ENCODE measurements at regions of chr2 and their contacts with region 1.

Region 1: GRCh38 chr2:227238238-227239237 is 74.1 kb downstream of the COL4A3 start:
- DNase-seq: peak; percentile 43
- H3K4me3 ChIP-seq: no peak overlapping the region
- H3K27ac ChIP-seq: no peak overlapping the region
- H3K27me3 ChIP-seq: peaks cover 5% of the 10 kb centered on the region
- CTCF ChIP-seq: peak; percentile 98

Region 2: DNA sequence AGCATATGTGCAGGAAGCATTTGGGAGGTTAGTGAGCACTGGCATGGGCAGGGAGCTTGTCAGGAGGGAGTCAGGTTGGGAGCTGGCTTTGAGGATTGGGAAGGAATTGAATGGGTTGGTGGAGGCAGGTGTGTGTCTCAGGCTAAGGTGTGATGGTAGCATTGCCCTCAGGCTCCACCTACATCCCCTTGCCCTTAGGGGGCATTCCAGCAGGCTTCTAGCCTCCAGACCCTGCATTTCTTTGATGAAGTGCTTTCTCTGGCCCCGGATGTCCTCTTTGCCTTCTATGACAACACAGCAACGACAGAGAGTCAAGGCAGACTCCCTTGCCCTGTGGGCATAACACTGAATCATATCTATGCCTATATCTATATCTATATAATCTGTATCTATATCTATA is 389.2 kb before region 1 on chr2:
- CTCF ChIA-PET with region 1: no interaction called
- POLR2A ChIA-PET with region 1: no interaction called
- DNase-seq: no peak
- H3K4me3 ChIP-seq: no peak overlapping the region
- H3K27ac ChIP-seq: no peak overlapping the region
- H3K27me3 ChIP-seq: no peaks in the 10 kb centered on the region
- CTCF ChIP-seq: no peak

Region 3: GRCh38 chr2:227125506-227125905 is 113.0 kb before region 1 on chr2:
- CTCF ChIA-PET with region 1: interaction called, 154 read pairs
- POLR2A ChIA-PET with region 1: no interaction called
- DNase-seq: no peak
- H3K4me3 ChIP-seq: no peak overlapping the region
- H3K27ac ChIP-seq: no peak overlapping the region
- H3K27me3 ChIP-seq: peaks cover 11% of the 10 kb centered on the region
- CTCF ChIP-seq: peak; percentile 33; the same call in 1 of the 2 replicates

Region 4: DNA sequence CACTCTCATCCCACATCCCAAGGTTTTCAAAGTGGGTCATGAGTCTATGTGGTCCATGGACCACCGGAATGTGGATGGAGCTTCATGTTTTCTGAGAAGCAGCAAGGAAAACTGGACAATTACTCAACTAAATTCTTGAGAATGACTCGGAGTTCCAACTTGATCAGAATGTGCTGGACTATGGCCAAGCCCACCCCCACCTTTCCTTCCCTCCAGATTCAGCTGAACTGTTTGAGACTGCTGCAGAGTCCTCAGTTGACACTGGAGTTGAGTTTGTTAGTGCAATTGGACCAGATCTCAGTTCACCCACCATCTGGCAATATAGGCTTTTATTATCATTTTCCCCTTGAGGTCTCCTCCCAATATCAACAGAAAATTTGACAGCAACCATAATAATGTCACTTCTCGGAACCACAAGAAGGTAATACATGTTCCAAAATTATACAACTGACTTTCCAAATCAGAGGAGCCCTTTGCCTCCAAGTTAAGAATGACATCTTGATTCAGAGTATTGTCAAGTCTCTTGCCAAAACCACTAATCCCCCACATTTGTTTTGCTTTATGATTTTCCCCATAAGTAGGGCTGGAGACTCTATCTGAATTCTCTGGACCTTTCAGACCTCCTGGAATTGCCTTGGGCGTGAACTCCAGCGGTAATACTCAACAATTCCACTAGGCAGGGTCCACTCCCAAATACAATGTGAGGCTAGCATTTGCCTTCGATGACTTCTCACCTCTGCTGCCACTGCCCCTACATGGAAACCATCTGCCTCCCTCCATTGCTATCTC is 83.4 kb before region 1 on chr2:
- CTCF ChIA-PET with region 1: interaction called, 14 read pairs
- POLR2A ChIA-PET with region 1: no interaction called
- DNase-seq: peak; percentile 1
- H3K4me3 ChIP-seq: no peak overlapping the region
- H3K27ac ChIP-seq: no peak overlapping the region
- H3K27me3 ChIP-seq: no peaks in the 10 kb centered on the region
- CTCF ChIP-seq: no peak

Region 5: DNA sequence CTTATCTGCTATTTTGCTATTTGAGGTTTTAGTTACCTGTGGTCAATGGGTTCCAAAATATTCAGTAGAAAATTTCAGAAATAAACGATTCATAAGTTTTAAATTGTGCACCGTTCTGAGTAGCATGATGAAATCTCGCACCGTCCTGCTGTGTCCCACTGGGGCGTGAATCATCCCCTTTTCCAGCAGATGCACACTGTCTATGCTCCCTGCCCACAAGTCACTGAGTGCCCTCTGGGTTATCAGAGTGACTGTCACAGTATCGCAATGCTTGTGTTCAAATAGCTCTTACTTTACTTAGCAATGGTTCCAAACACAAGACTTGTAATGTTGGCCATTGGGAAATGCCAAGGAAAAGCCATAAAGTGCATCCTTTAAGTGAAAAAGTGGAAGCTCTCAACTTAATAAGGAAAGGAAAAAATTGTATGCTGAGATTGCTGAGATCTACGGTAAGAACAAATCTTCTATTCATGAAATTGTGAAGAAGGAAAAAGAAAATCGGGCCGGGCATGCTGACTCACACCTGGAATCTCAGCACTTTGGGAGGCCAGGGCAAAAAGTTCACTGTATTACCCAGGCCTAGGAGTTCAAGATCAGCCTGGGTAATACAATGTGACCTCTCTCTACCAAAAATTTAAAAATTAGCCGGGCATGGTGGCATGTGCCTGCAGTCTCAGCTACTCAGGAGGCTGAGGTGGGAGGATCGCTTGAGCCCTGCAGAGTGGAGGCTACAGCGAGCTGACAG is 60.8 kb before region 1 on chr2:
- CTCF ChIA-PET with region 1: no interaction called
- POLR2A ChIA-PET with region 1: no interaction called
- DNase-seq: no peak
- H3K4me3 ChIP-seq: no peak overlapping the region
- H3K27ac ChIP-seq: no peak overlapping the region
- H3K27me3 ChIP-seq: no peaks in the 10 kb centered on the region
- CTCF ChIP-seq: no peak

Region 6: GRCh38 chr2:227228061-227228667 is 10.4 kb before region 1 on chr2:
- CTCF ChIA-PET with region 1: interaction called, 86 read pairs
- POLR2A ChIA-PET with region 1: no interaction called
- DNase-seq: no peak
- H3K4me3 ChIP-seq: no peak overlapping the region
- H3K27ac ChIP-seq: no peak overlapping the region
- H3K27me3 ChIP-seq: peaks cover 3% of the 10 kb centered on the region
- CTCF ChIP-seq: no peak

Region 7: GRCh38 chr2:227267410-227268148 is 29.0 kb after region 1 on chr2:
- CTCF ChIA-PET with region 1: interaction called, 12 read pairs
- POLR2A ChIA-PET with region 1: no interaction called
- DNase-seq: no peak
- H3K4me3 ChIP-seq: no peak overlapping the region
- H3K27ac ChIP-seq: no peak overlapping the region
- H3K27me3 ChIP-seq: no peaks in the 10 kb centered on the region
- CTCF ChIP-seq: no peak

Region 8: DNA sequence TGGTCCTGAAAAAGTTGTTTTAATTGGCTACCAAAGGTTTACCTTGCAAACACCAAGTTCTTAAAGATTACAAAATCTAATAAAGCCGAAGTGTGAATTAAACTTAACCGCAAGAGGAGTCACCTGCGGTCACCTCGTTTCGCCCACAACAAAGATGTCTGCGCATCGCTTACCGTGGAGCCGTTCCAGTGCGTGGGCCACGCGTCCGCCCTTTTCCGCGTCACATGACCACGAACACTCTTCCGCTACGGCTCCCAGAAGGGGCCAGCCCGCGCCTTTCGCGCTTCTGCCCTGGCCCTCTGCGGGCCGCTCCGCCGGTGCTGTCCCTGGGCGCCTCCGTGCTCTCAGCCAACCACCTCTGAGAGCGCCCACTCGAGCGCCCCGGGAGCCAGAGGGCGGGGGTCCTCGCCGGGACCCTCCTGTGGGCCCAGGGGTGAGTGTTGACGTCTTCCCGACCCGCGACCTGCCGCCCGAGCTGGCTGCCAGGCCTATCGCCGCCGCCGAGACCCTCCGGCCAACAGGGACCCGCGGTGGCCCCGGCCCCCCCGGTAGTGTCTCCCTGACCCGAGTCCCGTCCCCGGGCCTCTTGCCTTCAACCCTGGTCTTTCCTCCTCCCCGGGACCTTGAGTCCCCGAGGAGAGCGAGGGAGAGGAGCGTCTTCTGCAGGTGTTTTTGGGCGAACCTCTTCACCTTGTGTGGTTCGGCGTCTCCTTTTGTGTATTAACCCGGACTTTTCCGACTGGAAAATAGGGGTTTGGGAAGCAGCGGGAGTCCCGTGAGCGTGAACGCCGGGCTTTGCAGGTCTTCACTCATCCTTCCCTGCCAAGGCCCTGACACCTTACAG is 86.7 kb after region 1 on chr2 and contains the start of gene MFF:
- CTCF ChIA-PET with region 1: interaction called, 10 read pairs
- POLR2A ChIA-PET with region 1: no interaction called
- DNase-seq: peak; percentile 81
- H3K4me3 ChIP-seq: peak within 1 kb of the TSS; percentile 87
- H3K27ac ChIP-seq: peak within 1 kb of the TSS; percentile 84
- H3K27me3 ChIP-seq: no peaks in the 10 kb centered on the region
- CTCF ChIP-seq: no peak; the same call in none of the 2 replicates
- polyA plus RNA-seq, gene MFF: 207 and 255 TPM in 2 replicates

Measured in AG04450 (cell line).